Endothelial cell of umbilical vein (primary cell): ENCODE measurements at regions of chr6 and their contacts with region 1.

Region 1: DNA sequence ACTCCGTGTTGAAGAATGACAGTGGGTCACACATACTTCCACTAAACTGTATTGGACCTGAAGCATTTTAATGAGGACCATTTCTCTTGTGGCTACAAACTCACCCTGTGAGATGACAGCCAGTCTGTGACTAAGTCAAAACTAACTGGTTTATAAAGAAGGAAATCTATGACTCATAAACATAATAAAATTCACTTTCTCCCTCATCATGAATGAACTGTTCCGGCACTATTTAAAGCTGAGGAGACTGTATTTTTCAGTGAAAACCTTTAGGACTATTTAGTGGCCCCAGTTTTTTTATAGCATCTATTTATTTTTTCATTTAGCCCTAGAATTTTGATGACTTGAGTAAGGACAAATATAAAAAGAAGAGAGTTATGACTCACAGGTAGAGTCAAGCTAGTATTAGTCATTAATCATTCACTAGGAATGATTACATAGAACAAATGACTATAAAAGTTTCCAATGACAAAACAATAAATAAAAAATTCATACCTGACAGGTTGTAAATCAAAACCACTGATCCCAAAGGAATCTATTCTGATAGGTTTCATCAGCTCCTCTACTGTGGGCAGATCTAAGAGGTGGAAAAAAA is 34.2 kb downstream of the CEP162 start:
- DNase-seq: peak; percentile 90
- H3K4me3 ChIP-seq: no peak overlapping the region
- H3K27ac ChIP-seq: peak overlapping the region; percentile 39
- H3K4me1 ChIP-seq: peaks cover 17% of the 10 kb centered on the region
- H3K27me3 ChIP-seq: no peaks in the 10 kb centered on the region
- CTCF ChIP-seq: no peak
- POLR2A ChIP-seq: no peak

Region 2: DNA sequence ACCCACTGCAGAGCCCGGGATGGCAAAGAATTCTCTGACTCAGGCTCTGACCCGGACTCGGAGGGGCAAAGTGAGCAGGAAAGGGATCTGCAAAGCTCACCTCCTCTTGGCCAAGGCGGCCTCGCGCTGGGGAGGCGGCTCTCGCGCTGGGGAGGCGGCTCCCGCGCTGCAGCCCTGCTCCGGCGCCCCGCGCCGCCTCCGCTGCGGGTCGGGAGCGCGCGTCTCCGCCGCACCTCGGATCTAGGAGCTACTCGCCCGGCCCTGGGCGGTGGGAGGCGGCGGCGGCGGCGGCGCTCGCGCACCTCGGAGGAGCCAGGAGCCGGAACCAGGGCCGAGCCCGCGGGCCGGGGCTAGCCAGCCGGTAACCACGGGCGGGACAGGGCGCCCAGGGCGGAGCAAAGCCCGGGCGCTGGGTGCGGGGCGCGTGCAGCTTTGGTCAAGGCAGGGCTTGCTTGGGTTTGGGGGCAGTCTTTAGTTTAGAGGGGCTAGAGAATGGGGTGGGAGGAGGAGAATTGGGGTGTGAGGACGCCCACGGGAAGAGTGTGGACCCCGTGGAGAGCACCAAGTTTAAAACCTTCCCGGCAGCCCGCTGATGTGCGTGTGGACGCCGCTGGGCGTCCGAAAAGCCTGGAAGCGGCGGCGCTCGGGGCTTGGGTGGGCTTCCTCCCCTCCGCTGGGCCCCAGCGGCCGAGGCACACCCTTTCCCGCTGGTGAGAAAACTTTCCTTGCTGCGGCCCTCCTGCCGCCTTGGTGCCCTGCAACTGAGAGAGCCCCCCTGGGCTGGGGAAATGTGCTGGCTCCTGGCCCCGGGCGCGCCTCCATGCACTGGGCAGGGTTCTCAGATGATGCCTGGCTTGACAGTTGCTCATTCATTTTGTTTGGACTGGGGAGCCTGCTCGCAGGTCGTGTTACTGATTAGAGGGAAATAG is 159.4 kb before region 1 on chr6 and contains the start of gene MRAP2:
- CTCF ChIA-PET with region 1: no interaction called
- POLR2A ChIA-PET with region 1: no interaction called
- dilution Hi-C with region 1: no loop called
- intact Hi-C with region 1: loop called (anchors 10 kb)
- DNase-seq: peak; percentile 32
- H3K4me3 ChIP-seq: peak within 1 kb of the TSS; percentile 41 to 67 (median 52)
- H3K27ac ChIP-seq: no peak within 1 kb of the TSS
- H3K4me1 ChIP-seq: peaks cover 6% of the 10 kb centered on the region
- H3K27me3 ChIP-seq: peaks cover 3 to 5% of the 10 kb centered on the region in 2 experiments
- CTCF ChIP-seq: no peak
- POLR2A ChIP-seq: no peak
- total RNA-seq, gene MRAP2: 3.5 and 5.8 TPM in 2 replicates